ENCODE measurements at regions of chr19 and their contacts with region 1.

Region 1: DNA sequence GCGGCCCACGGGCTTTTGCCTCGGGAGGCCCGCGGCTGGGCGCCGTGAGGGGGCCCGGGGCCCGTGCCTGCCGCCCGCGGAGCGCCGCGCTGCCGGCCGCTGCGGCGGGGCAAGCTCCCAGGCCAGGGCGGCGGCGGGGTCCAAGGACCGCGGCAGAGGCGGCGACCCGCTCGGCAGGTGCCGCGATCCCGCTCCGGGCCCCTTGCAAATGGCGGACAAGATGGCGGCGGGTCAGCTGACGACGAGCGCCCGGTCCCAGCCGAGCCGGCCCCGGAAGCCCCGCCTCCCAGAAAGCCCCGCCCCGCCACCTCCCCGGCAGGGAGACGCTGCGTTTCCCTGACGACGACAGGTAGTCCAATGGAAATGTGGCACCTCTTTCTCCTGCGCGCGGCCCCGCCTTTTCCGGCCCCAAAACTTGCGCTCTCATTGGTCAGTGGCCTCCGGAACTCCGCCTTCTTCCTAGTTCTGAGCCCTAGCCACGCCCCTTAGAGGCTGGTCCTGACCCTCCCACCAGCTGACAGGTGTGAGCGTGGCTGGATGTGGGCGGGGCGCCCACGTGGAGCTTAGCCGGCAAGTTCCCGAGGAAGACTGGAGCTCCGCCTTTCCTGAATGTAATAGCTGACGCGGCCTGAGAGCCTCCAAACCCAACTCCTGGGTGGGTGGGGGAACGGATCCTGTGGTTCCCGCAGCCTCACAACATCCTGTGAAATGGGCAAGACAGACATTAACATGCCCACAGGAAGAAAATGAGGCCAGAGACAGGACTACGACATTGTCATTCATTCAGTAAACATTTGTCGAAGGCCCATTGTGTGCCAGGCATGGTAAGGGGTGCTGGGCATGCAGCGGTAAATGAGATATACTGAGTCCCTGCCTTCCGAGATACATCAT is at the start of gene AP3D1:
- DNase-seq: peak; percentile 100
- H3K4me3 ChIP-seq: peak within 1 kb of the TSS; percentile 91 to 100 (median 98)
- H3K27ac ChIP-seq: peak within 1 kb of the TSS; percentile 72
- H3K4me1 ChIP-seq: peaks cover 32% of the 10 kb centered on the region
- H3K27me3 ChIP-seq: no peaks in the 10 kb centered on the region
- CTCF ChIP-seq: no peak
- total RNA-seq, gene AP3D1: 124 to 143 TPM

Region 2: DNA sequence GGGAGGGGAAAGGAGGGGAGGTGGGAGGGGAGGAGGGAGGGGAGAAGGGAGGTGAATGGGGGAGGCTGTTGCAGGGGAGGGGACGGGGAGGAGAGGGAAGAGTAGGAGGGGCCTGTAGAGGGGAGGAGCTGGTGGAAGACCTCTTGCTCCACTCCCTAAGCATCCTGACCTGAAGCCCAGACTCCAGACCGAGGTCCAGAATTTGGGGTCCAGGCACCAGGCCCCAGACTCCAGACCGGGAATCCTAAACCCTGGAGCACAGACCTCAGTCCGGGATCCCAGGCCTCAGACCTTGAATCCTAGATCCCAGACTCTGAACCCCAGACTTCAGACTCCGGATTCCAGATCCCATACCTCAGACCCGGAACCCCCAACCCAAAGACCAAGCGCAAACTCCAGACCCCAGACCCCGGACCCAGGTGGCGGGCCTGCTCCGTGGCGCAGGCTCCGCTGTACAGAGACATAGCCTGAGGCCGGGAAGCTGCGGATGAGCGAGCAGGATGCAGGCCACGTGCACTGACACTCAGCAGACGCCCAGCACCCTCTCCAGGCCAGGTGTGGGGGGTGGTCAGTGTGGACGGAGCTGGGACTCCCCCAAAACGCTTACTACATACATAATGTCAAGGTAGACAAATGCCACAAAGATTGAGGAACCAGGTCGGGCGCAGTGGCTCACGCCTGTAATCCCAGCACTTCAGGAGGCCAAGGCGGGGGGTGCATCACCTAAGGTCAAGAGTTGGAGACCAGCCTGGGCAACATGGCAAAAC is 135.4 kb before region 1 on chr19:
- CTCF ChIA-PET with region 1: no interaction called
- dilution Hi-C with region 1: no loop called
- in situ Hi-C with region 1: no loop called
- intact Hi-C with region 1: loop called (anchors 2 kb)
- DNase-seq: peak; percentile 66
- H3K4me3 ChIP-seq: peak overlapping the region in 1 of 3 experiments; percentile 38
- H3K27ac ChIP-seq: no peak overlapping the region
- H3K4me1 ChIP-seq: peaks cover 8% of the 10 kb centered on the region
- H3K27me3 ChIP-seq: no peaks in the 10 kb centered on the region
- CTCF ChIP-seq: no peak

Region 3: DNA sequence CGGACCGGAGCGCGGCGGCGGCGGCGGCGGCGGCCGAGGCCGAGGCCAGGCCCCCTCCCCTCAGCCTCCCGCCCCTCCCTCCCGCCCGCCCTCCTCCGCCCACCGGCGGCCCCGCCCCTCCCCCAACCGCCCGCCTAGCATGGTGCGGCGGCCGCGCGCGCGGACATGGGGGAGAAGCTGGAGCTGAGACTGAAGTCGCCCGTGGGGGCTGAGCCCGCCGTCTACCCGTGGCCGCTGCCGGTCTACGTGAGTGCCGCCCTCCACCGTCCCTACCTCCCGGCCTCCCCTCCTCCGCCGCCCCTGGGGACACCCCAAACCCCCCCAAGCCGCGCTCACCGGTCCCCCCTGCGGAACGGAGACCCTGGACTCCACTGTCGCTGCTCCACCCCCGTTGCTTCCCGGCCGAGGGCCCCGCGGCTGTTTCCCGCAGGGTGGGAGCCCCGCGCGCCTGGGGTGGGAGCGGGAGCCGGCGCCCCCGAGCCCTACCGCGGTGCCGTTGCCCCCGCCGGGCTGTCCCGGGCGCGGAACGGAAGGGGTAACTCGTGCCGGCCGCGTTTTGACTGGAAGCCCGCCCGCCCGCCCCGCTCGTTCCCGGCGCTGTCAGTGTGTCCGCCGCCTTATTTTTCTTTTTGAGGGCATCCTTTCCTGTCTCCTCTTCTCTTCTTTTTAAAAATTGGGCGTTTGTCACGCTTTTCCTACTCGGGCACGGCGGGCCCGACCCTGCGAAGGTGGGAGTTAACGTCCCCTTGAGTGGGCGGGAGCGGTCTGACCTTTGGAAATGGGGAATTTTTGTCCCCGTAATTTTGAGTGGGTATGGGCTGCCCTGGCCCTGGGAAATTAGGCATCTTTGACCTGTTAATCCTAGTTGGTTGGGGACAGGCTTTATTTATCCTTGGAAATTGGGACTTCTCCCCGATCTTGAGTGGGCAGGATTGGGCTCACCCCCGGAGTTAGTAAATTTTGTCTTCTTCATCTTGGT is 12.7 kb after region 1 on chr19:
- CTCF ChIA-PET with region 1: interaction called, 9 read pairs
- dilution Hi-C with region 1: no loop called
- in situ Hi-C with region 1: no loop called
- intact Hi-C with region 1: loop called (anchors 2 kb)
- DNase-seq: peak; percentile 31
- H3K4me3 ChIP-seq: peak overlapping the region; percentile 82 to 95 (median 94)
- H3K27ac ChIP-seq: peak overlapping the region; percentile 62
- H3K4me1 ChIP-seq: peaks cover 25% of the 10 kb centered on the region
- H3K27me3 ChIP-seq: no peaks in the 10 kb centered on the region
- CTCF ChIP-seq: no peak

Region 4: DNA sequence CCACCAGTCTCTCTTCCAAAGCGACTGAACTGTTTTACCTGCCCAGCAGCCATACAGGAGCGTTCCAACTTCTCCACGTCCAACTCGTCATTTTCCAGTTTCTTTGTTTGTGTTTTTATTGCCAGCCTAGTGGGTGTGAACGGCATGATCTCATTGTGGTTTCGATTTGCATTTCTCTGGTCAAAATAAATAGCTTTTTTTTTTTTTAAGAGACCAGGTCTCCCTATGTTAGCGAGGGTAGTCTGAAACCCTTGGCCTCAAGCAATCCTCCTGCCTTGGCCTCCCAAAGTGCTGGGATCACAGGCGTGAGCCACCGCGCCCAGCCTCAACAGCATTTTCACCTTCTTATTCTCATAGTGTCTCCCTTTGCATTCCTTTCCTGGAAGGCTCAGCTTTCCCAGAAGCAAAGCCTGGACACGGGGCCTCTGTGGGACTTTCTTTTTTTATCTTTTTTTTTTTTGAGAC is 108.8 kb after region 1 on chr19:
- CTCF ChIA-PET with region 1: interaction called, 11 read pairs
- dilution Hi-C with region 1: no loop called
- in situ Hi-C with region 1: no loop called
- intact Hi-C with region 1: no loop called
- DNase-seq: no peak
- H3K4me3 ChIP-seq: no peak overlapping the region
- H3K27ac ChIP-seq: no peak overlapping the region
- H3K4me1 ChIP-seq: no peaks in the 10 kb centered on the region
- H3K27me3 ChIP-seq: no peaks in the 10 kb centered on the region
- CTCF ChIP-seq: no peak

Region 5: GRCh38 chr19:2391118-2391725 is 239.6 kb after region 1 on chr19:
- CTCF ChIA-PET with region 1: interaction called, 3 read pairs
- dilution Hi-C with region 1: no loop called
- in situ Hi-C with region 1: no loop called
- intact Hi-C with region 1: loop called (anchors 1 kb)
- DNase-seq: peak; percentile 51
- H3K4me3 ChIP-seq: no peak overlapping the region
- H3K27ac ChIP-seq: no peak overlapping the region
- H3K4me1 ChIP-seq: no peaks in the 10 kb centered on the region
- H3K27me3 ChIP-seq: no peaks in the 10 kb centered on the region
- CTCF ChIP-seq: peak; percentile 76

Measured in mammary epithelial cell (primary cell).